ENCODE measurements at regions of chr13 and their contacts with region 1.

Region 1: GRCh38 chr13:112953591-112954487 is 15.2 kb upstream of the MCF2L start:
- DNase-seq: no peak
- ATAC-seq: no peak
- H3K4me3 ChIP-seq: no peak overlapping the region
- H3K27ac ChIP-seq: no peak overlapping the region
- H3K4me1 ChIP-seq: peaks cover 0 to 10% (median 8%) of the 10 kb centered on the region in 12 donors
- H3K27me3 ChIP-seq: peaks cover 0 to 3% (median 0%) of the 10 kb centered on the region in 9 donors
- CTCF ChIP-seq: no peak
- POLR2A ChIP-seq: no peak

Region 2: GRCh38 chr13:113022391-113023216 is 68.8 kb after region 1 on chr13:
- intact Hi-C with region 1: loop called in 2 of 10 experiments (anchors 5 kb)
- DNase-seq: no peak
- ATAC-seq: peak; percentile 4 to 47 (median 38)
- H3K4me3 ChIP-seq: peak overlapping the region in 2 of 12 donors; percentile 6 to 12
- H3K27ac ChIP-seq: peak overlapping the region in 10 of 12 donors; percentile 15 to 75 (median 58)
- H3K4me1 ChIP-seq: peaks cover 0 to 32% (median 10%) of the 10 kb centered on the region in 12 donors
- H3K27me3 ChIP-seq: peaks cover 0 to 5% (median 0%) of the 10 kb centered on the region in 9 donors
- CTCF ChIP-seq: no peak
- POLR2A ChIP-seq: no peak

Region 3: GRCh38 chr13:113029487-113030258 is 75.8 kb after region 1 on chr13:
- intact Hi-C with region 1: loop called in 3 of 10 experiments (anchors 5 kb)
- DNase-seq: no peak
- ATAC-seq: peak in 2 of 4 donors; percentile 27 to 60
- H3K4me3 ChIP-seq: no peak overlapping the region
- H3K27ac ChIP-seq: no peak overlapping the region
- H3K4me1 ChIP-seq: peaks cover 0 to 10% (median under 1%) of the 10 kb centered on the region in 12 donors
- H3K27me3 ChIP-seq: peaks cover 0 to 5% (median 0%) of the 10 kb centered on the region in 9 donors
- CTCF ChIP-seq: peak; percentile 61 to 87 (median 76)
- POLR2A ChIP-seq: no peak